GM12878 (cell line): ENCODE measurements at regions of chr17 and their contacts with region 1.

Region 1: GRCh38 chr17:27975146-27976011 is 67.1 kb upstream of the NLK start:
- DNase-seq: no peak
- ATAC-seq: peak; percentile 75
- H3K4me3 ChIP-seq: no peak overlapping the region
- H3K27ac ChIP-seq: no peak overlapping the region
- H3K4me1 ChIP-seq: peaks cover 23% of the 10 kb centered on the region
- H3K27me3 ChIP-seq: no peaks in the 10 kb centered on the region
- CTCF ChIP-seq: no peak
- EP300 ChIP-seq: no peak
- POLR2A ChIP-seq: no peak
- RAD21 ChIP-seq: no peak

Region 2: DNA sequence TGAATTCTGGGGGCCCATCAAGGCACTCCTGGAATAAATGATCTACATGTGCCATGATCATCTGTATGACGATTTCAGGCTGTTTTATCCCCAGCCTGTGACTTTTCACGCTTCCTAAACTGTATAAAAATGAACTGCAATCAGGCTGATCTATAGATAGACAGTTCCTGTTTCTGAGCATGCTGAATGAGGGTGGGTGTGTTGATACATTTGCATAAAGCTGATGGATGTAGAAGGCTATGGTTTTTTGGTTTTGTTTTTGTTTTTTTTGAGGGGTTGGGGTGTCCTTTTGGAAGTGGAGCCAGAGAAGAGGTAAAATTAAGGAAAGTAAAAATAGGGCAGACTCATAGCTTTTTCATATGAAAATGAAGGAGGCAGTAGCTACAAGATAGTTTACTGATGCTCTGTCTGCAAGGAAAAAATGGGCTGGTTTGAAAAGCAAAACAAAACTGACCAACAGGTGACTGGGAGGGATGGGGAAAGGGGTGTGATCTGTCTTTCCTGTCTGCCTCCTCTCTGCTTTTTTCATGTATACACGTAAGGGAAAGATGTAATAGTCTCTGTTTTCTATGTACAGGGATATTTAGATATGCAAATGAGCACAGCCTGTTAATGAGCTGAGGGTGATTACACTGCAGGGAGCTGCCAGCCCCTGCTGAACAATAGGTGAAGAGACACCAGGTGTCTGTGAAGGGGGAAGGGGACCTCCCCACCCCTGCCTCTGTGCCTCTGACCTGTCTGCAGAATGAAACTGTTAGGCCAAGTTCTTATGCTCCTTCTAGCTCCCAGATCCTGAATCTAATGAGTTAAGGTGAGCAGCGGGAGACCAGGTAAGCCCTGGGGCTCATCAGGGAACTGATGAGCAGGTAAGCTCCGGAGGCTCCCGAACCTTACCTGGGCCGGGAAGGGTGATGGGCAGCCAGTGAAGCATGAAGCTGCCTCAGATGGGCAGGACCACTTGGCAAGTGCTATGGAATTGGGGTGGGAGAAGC is 35.6 kb before region 1 on chr17:
- CTCF ChIA-PET with region 1: no interaction called
- POLR2A ChIA-PET with region 1: interaction called, 4 read pairs
- RAD21 ChIA-PET with region 1: interaction called, 25 read pairs
- SMC1A ChIA-PET with region 1: interaction called, 22 read pairs
- in situ Hi-C with region 1: no loop called
- intact Hi-C with region 1: no loop called
- DNase-seq: no peak
- ATAC-seq: peak; percentile 93
- H3K4me3 ChIP-seq: no peak overlapping the region
- H3K27ac ChIP-seq: no peak overlapping the region
- H3K4me1 ChIP-seq: peaks cover 13% of the 10 kb centered on the region
- H3K27me3 ChIP-seq: no peaks in the 10 kb centered on the region
- CTCF ChIP-seq: no peak
- EP300 ChIP-seq: no peak; a peak in 1 of 4 replicates
- POLR2A ChIP-seq: no peak
- RAD21 ChIP-seq: no peak

Region 3: GRCh38 chr17:27959382-27959709 is 16.0 kb before region 1 on chr17:
- CTCF ChIA-PET with region 1: interaction called, 6 read pairs
- POLR2A ChIA-PET with region 1: interaction called, 3 read pairs
- RAD21 ChIA-PET with region 1: no interaction called
- SMC1A ChIA-PET with region 1: interaction called, 14 read pairs
- in situ Hi-C with region 1: no loop called
- intact Hi-C with region 1: no loop called
- DNase-seq: no peak
- ATAC-seq: no peak
- H3K4me3 ChIP-seq: no peak overlapping the region
- H3K27ac ChIP-seq: no peak overlapping the region
- H3K4me1 ChIP-seq: no peaks in the 10 kb centered on the region
- H3K27me3 ChIP-seq: no peaks in the 10 kb centered on the region; a peak in 1 of 4 replicates
- CTCF ChIP-seq: no peak
- EP300 ChIP-seq: no peak
- POLR2A ChIP-seq: no peak
- RAD21 ChIP-seq: no peak